Caco-2 (cell line): ENCODE measurements at regions of chr1 and their contacts with region 1.

Region 1: DNA sequence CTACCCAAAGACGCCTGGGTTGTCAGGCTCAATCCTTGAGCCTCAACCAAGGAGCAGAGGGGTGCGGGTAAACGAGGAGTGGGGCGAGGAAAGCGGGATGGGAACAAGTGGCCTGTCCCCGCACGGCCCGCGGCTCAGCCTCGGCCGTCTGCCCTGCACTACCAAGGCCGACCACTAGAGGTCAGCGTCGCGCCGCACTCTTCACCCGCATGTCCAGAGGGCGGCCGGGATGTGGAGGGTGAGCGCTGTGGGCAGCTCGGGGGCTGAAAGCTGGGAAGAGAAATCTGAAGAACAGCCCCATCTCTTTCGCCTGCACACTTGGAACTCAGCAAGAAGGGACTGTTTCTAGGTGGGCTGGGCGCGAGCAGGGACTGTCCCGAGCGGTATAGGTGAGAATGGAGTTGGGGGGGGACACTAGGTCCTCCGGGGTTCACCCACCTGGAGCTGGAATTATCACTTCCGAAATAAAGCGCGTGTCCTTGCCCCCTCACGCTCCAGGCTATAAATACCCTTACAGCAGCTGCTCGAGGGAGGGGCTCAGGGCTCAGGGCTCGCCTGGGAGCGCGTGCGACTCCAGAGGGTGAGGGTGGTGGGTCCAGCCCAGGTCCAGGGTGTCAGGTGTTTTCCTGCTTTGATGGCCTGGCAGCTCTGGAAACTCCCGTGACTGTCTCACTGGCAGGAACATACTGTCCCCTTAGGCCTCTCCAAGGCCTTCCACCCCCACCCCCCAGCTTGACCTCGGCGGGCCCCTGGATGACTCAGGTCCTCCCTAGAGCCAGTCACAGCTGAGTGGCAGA is 9.8 kb downstream of the SLC30A2 start:
- DNase-seq: peak; percentile 80 to 85
- H3K4me3 ChIP-seq: peak overlapping the region; percentile 86
- H3K4me3 Mint-ChIP-seq: peak overlapping the region; percentile 88
- H3K27ac Mint-ChIP-seq: peak overlapping the region; percentile 56
- H3K4me1 ChIP-seq: peaks cover 9% of the 10 kb centered on the region
- H3K4me1 Mint-ChIP-seq: peaks cover 8% of the 10 kb centered on the region
- H3K27me3 ChIP-seq: no peaks in the 10 kb centered on the region
- H3K27me3 Mint-ChIP-seq: no peaks in the 10 kb centered on the region
- CTCF ChIP-seq: peak; percentile 86 to 90

Region 2: DNA sequence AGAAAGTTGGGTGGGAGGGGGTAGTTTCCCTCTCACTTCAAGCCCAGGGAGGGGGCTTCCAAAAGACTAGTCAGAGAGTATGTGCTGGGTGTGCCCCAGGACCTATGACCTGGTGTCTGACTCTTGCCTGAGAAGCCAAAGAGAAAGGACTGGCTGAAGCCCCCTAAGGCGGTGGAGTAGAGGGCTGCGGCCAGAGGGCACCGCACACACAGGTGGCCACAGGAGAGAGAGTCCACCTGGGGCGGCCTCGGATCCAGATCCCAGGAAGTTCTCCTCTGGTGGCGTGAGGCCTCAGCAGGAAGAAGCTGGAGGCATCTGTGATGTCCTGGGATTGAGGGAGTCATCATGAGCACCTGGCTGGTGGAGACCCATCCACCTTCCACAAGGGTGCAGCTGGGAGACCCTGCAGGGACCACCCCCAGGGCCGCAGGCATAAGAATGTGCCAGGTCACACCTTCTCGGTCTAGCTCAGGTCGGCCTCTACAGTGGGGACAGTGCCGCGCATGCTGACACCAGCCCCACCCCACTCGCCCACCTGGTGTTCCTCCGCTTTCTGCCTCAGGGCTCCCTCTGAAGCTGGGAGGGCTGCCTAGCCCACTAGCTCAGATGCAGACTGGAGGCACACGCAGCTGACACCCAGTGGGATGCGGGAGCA is 155.0 kb before region 1 on chr1:
- CTCF ChIA-PET with region 1: no interaction called
- POLR2A ChIA-PET with region 1: no interaction called
- intact Hi-C with region 1: no loop called
- DNase-seq: no peak
- H3K4me3 ChIP-seq: no peak overlapping the region
- H3K4me3 Mint-ChIP-seq: no peak overlapping the region
- H3K27ac Mint-ChIP-seq: peak overlapping the region; percentile 73
- H3K4me1 ChIP-seq: peaks cover 40% of the 10 kb centered on the region
- H3K4me1 Mint-ChIP-seq: peaks cover 32% of the 10 kb centered on the region
- H3K27me3 ChIP-seq: no peaks in the 10 kb centered on the region
- H3K27me3 Mint-ChIP-seq: no peaks in the 10 kb centered on the region
- CTCF ChIP-seq: no peak

Region 3: DNA sequence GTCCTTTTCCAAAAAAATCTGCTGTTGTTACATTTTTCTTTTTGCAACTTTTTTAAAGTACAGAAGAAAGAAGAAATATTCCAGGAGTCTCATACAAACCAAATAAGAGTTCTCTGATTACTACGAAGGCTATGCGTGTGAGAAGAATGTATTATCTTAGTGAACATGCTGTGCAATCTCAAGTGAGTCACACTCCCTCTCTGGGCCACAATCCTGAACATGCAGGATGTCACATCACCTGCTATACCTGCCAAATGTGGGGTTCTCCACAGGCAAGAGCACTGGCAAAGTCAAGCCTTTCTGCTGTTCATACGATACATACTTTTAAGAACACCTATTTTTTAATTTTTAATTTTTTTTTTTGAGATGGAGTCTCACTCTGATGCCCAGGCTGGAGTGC is 53.0 kb after region 1 on chr1:
- CTCF ChIA-PET with region 1: no interaction called
- POLR2A ChIA-PET with region 1: no interaction called
- intact Hi-C with region 1: no loop called
- DNase-seq: no peak
- H3K4me3 ChIP-seq: no peak overlapping the region
- H3K4me3 Mint-ChIP-seq: no peak overlapping the region
- H3K27ac Mint-ChIP-seq: no peak overlapping the region
- H3K4me1 ChIP-seq: peaks cover 17% of the 10 kb centered on the region
- H3K4me1 Mint-ChIP-seq: peaks cover 7% of the 10 kb centered on the region
- H3K27me3 ChIP-seq: no peaks in the 10 kb centered on the region
- H3K27me3 Mint-ChIP-seq: no peaks in the 10 kb centered on the region
- CTCF ChIP-seq: no peak

Region 4: DNA sequence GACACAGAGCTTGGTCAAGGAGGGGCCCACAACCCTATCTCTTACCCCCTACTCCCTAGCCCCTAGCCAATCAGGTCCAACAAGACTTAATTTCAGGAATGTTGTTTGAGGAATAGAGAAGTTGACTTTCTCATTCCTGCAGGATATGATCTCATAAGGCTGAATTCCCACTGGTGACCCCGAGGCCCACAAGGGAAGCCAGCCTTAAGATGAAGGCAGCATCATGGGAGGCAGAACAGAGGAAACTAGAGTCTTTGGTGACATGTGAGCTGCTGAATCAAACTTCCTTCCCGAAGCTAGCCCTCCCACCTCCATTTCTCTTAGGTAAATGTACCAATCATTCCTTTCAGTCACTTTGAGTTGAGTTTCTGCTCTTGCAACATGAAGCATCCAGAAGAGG is 66.4 kb after region 1 on chr1:
- CTCF ChIA-PET with region 1: interaction called, 6 read pairs
- POLR2A ChIA-PET with region 1: no interaction called
- intact Hi-C with region 1: loop called (anchors 2 kb)
- DNase-seq: peak in 1 of 2 experiments; percentile 39
- H3K4me3 ChIP-seq: no peak overlapping the region
- H3K4me3 Mint-ChIP-seq: no peak overlapping the region
- H3K27ac Mint-ChIP-seq: peak overlapping the region; percentile 46
- H3K4me1 ChIP-seq: peaks cover 67% of the 10 kb centered on the region
- H3K4me1 Mint-ChIP-seq: peaks cover 23% of the 10 kb centered on the region
- H3K27me3 ChIP-seq: no peaks in the 10 kb centered on the region
- H3K27me3 Mint-ChIP-seq: no peaks in the 10 kb centered on the region
- CTCF ChIP-seq: no peak

Region 5: DNA sequence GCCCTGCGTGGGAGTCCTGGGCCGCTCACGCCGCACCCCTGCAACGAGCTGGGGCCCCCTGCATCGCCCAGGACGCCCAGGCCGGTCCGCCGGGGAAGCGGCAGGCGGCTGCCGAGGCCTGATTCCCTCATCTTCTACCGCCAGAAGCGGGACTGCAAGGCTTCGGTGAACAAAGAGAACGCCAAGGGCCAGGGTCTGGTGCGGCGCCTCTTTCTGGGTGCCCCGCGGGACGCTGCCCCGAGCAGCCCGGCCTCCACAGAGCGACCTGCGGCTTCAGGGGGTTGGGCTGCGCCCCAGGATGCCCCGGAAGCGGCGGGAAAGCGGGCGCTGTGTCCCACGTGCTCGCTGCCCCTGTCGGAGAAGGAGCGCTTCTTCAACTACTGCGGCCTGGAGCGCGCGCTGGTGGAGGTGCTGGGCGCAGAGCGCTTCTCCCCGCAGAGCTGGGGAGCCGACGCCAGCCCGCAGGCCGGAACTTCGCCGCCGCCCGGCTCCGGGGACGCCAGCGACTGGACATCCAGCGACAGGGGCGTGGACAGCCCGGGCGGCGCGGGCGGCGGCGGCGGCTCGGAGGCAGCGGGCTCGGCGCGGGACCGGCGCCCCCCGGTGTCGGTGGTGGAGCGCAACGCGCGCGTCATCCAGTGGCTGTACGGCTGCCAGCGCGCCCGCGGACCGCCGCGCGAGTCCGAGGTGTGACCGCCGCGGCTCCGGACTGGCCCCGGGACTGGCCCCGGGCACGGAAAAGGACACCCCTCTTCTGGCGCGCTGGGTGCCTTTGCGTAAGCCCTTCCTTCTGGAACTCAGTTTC is 125.5 kb after region 1 on chr1:
- CTCF ChIA-PET with region 1: interaction called, 13 read pairs
- POLR2A ChIA-PET with region 1: no interaction called
- intact Hi-C with region 1: loop called (anchors 5 kb)
- DNase-seq: peak; percentile 59 to 80
- H3K4me3 ChIP-seq: peak overlapping the region; percentile 53
- H3K4me3 Mint-ChIP-seq: peak overlapping the region; percentile 72
- H3K27ac Mint-ChIP-seq: no peak overlapping the region
- H3K4me1 ChIP-seq: peaks cover 29% of the 10 kb centered on the region
- H3K4me1 Mint-ChIP-seq: peaks cover 14% of the 10 kb centered on the region
- H3K27me3 ChIP-seq: no peaks in the 10 kb centered on the region
- H3K27me3 Mint-ChIP-seq: no peaks in the 10 kb centered on the region
- CTCF ChIP-seq: peak in 1 of 2 experiments; percentile 18